GM12878 (cell line): ENCODE measurements at regions of chr5 and their contacts with region 1.

Region 1: GRCh38 chr5:125412561-125413495 is 666.4 kb upstream of the ZNF608 start:
- DNase-seq: no peak
- ATAC-seq: peak; percentile 57
- H3K4me3 ChIP-seq: peak overlapping the region; percentile 51; the same call in 1 of the 2 replicates
- H3K27ac ChIP-seq: peak overlapping the region; percentile 88
- H3K4me1 ChIP-seq: peaks cover 43% of the 10 kb centered on the region
- H3K27me3 ChIP-seq: no peaks in the 10 kb centered on the region
- CTCF ChIP-seq: peak; percentile 2 to 23 (median 3); a peak in 1 of 6 replicates
- EP300 ChIP-seq: no peak
- POLR2A ChIP-seq: no peak
- RAD21 ChIP-seq: 0 out of 2 replicates have a peak, but pooled peaks have one; percentile 23

Region 2: DNA sequence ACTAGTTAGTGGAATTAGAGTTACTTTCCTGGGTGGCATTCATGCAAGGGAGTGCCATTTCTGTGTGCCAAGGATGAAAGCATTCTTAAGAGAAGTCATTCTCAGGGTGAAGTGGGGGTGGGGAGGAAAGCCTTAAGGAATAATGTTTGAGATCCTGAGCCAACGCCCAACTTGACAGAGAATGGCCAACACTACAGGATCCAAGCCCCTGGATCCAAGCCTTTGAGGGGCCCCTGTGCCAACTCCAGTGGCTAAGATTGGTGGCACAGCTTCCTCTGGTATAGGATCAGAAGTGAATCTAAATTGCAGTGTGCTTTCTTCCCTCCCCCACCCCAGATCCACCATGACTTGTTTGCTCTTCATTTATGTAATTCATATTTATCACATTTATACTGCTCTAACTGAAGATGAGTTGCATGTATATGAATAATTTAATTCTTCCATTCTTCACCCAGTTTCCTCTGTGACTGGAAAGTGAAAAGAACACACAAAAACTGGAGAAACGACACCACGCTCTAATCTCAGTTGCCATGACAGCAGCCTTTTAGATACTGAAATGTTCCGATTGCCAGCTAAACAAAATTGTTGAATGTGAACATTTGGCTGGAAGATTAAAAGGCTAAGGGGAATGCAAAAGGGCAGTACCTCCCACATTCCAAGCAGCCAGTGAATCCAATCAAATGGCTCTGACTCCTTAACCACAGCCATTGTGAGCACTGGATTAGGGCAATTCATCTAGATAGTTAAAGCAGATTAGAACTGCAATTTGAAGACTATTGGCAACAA is 670.9 kb before region 1 on chr5:
- CTCF ChIA-PET with region 1: no interaction called
- POLR2A ChIA-PET with region 1: no interaction called
- RAD21 ChIA-PET with region 1: no interaction called
- SMC1A ChIA-PET with region 1: no interaction called
- in situ Hi-C with region 1: no loop called
- intact Hi-C with region 1: loop called (anchors 5 kb)
- DNase-seq: no peak
- ATAC-seq: no peak
- H3K4me3 ChIP-seq: peak overlapping the region; percentile 71
- H3K27ac ChIP-seq: peak overlapping the region; percentile 67
- H3K4me1 ChIP-seq: peaks cover 3% of the 10 kb centered on the region
- H3K27me3 ChIP-seq: 0 out of 4 replicates have a peak, but pooled peaks cover 0 to 4% of the 10 kb centered on the region in 2 experiments
- CTCF ChIP-seq: no peak
- EP300 ChIP-seq: no peak
- POLR2A ChIP-seq: no peak
- RAD21 ChIP-seq: no peak

Region 3: DNA sequence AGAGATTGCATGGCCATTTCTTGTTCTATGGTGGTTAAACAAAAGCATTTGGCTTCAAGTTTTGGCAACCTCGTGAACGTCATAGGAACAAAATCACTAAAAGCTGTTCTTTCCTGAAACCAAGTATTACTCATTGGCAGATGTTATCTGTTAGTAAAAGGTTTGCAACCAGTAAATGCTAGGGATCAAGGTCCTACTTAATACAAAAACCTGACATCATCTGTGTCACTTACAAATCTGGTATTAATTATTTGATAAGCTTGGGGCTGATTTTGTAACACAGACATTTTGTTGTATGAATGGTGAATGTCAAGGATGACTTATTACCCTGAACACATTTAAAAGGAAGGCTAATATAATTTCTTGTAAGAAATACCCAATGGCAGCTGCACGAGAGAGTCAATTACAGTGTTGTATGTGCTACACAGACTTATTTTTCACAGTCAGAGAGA is 180.0 kb before region 1 on chr5:
- CTCF ChIA-PET with region 1: no interaction called
- POLR2A ChIA-PET with region 1: no interaction called
- RAD21 ChIA-PET with region 1: no interaction called
- SMC1A ChIA-PET with region 1: no interaction called
- in situ Hi-C with region 1: no loop called
- intact Hi-C with region 1: no loop called
- DNase-seq: no peak
- ATAC-seq: no peak
- H3K4me3 ChIP-seq: no peak overlapping the region
- H3K27ac ChIP-seq: no peak overlapping the region
- H3K4me1 ChIP-seq: no peaks in the 10 kb centered on the region
- H3K27me3 ChIP-seq: 0 out of 4 replicates have a peak, but pooled peaks cover 0 to 3% of the 10 kb centered on the region in 2 experiments
- CTCF ChIP-seq: no peak
- EP300 ChIP-seq: no peak
- POLR2A ChIP-seq: no peak
- RAD21 ChIP-seq: no peak

Region 4: DNA sequence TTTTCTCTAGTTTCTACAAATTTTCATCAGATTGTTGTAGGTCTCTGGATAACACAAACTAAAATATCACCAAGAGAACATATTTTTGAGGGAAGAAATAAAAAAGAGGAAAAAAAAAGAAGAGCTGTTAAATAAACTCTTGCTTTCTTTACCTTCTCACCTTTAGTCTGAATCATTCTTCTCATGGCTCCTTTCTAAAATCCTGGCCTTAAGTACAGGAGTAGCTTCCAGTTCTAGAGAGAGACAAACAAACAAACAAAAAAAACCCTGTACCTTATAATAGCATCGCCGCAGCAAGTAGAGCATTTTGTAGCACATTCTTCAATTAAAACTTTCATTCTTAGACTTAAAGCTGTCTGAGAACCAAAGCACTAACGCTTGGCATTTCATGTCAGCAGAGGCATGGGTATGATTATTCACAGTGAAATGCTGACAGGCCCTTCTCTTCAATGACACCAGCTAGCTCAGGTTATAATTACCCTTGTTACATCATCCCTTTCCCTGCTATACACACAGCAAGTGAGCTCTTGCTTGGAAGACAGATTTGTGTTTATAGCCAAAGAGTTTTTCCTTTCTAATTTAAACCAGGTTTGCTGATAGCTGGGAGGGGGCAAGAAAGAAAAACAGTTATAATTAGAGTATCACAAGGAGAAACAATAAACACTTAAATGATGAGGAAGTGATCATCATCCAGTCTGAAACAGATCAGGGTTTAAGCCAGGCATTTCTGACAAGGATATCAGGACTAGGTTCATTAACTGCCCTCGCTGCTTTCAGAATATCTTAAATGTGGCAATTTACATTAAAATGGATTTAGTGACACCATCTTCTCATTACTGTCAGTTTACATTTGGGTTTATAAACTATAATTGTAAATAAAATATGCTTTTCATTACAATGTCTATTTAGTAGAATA is 155.5 kb before region 1 on chr5:
- CTCF ChIA-PET with region 1: no interaction called
- POLR2A ChIA-PET with region 1: no interaction called
- RAD21 ChIA-PET with region 1: no interaction called
- SMC1A ChIA-PET with region 1: no interaction called
- in situ Hi-C with region 1: no loop called
- intact Hi-C with region 1: loop called (anchors 5 kb)
- DNase-seq: no peak
- ATAC-seq: no peak
- H3K4me3 ChIP-seq: no peak overlapping the region
- H3K27ac ChIP-seq: no peak overlapping the region
- H3K4me1 ChIP-seq: no peaks in the 10 kb centered on the region
- H3K27me3 ChIP-seq: no peaks in the 10 kb centered on the region
- CTCF ChIP-seq: no peak
- EP300 ChIP-seq: no peak
- POLR2A ChIP-seq: no peak
- RAD21 ChIP-seq: no peak